ENCODE measurements at regions of chr19 and their contacts with region 1.

Region 1: GRCh38 chr19:1094975-1095701 is at the start of gene POLR2E:
- DNase-seq: peak; percentile 92 to 98 (median 95)
- ATAC-seq: peak; percentile 95
- H3K4me3 ChIP-seq: peak within 1 kb of the TSS; percentile 78
- H3K27ac ChIP-seq: peak within 1 kb of the TSS; percentile 65
- H3K4me1 ChIP-seq: peaks cover 24 to 61% of the 10 kb centered on the region in 2 experiments; a peak in 4 of 5 replicates
- H3K27me3 ChIP-seq: no peaks in the 10 kb centered on the region
- CTCF ChIP-seq: no peak
- EP300 ChIP-seq: peak; percentile 47; the same call in 1 of the 2 replicates
- POLR2A ChIP-seq: peak; percentile 90
- RAD21 ChIP-seq: no peak; a peak in 1 of 4 replicates
- polyA plus RNA-seq, gene POLR2E: 3.4 to 32.5 TPM

Region 2: DNA sequence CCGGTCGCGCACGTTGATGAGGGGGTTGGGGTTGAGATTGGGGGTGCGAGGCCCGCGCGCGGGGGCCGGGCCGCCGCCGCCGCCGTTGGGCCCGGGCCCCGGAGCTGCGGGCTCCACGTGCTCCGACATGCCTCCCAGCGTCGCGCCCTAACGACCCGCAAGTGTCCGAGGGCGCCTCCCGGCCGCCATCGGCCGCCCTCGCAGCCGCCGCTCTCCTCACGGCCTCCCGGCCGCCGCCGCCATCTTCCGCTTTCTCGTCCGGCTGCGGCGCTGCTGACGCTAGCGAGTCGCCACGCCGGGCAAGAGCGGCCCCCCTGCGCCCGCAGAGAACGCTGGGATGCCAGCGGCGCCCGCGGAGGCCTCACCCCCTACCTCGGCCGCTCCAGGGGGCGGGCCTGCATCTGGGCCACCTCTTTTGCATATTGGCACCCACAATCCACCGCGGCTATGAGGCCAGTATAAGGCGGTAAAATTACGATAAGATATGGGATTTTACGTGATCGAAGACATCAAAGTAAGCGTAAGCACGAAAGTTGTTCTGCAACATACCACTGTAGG is 74.2 kb before region 1 on chr19 and contains the start of gene TMEM259:
- CTCF ChIA-PET with region 1: no interaction called
- POLR2A ChIA-PET with region 1: no interaction called
- in situ Hi-C with region 1: no loop called
- intact Hi-C with region 1: no loop called
- DNase-seq: peak; percentile 87 to 97 (median 92)
- ATAC-seq: peak; percentile 90
- H3K4me3 ChIP-seq: peak within 1 kb of the TSS; percentile 94
- H3K27ac ChIP-seq: peak within 1 kb of the TSS; percentile 100
- H3K4me1 ChIP-seq: peaks cover 27 to 76% of the 10 kb centered on the region in 2 experiments
- H3K27me3 ChIP-seq: no peaks in the 10 kb centered on the region
- CTCF ChIP-seq: no peak
- EP300 ChIP-seq: no peak
- POLR2A ChIP-seq: no peak
- RAD21 ChIP-seq: no peak
- polyA plus RNA-seq, gene TMEM259: 0.52 to 0.57 TPM

Region 3: DNA sequence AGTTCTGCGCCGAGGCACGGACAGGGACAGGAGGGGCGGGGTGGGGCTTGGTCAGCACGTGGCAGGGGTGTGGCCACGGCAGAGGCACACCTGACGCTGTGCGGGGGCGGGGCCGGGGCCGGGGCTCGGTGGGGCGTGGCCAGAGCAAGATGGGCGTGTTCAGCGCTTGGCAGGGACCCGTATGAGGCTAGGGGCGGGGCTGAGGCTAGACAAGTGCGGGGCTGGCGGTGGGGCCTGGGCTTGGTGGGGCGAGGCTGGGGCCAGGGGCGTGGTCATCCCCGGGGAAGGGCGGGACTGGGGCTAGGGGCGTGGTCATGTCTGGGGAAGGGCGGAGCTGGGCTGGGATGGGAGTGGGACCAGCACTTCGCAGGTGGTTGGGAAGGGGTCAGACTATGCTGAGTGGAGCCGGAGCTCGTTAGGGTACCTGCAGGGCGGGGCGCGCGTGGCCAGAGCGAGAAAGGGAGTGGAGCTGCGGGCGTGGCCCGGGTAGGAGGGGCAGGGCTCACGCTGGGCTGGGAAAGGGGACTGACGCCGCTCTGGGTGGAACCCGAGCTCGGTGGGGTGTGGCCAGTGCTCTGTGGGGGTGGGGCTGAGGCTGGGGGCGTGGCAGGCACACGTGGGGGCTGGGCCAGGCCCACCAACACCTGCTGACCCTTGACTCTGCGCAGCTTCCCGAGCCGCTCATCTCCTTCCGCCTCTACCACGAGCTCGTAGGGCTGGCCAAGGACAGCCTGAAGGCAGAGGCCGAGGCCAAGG is 12.8 kb before region 1 on chr19:
- CTCF ChIA-PET with region 1: no interaction called
- POLR2A ChIA-PET with region 1: interaction called, 45 read pairs
- in situ Hi-C with region 1: no loop called
- intact Hi-C with region 1: no loop called
- DNase-seq: peak; percentile 95 to 97 (median 96)
- ATAC-seq: peak; percentile 94
- H3K4me3 ChIP-seq: peak overlapping the region; percentile 54
- H3K27ac ChIP-seq: peak overlapping the region; percentile 69; the same call in 2 of the 3 replicates
- H3K4me1 ChIP-seq: peaks cover 6 to 76% of the 10 kb centered on the region in 2 experiments
- H3K27me3 ChIP-seq: no peaks in the 10 kb centered on the region
- CTCF ChIP-seq: no peak
- EP300 ChIP-seq: no peak
- POLR2A ChIP-seq: peak; percentile 17; the same call in 1 of the 2 replicates
- RAD21 ChIP-seq: no peak

Measured in K562 (cell line).